ENCODE measurements at regions of chr4 and their contacts with region 1.

Region 1: GRCh38 chr4:112284662-112285411 is 867 bp downstream of the TIFA start:
- DNase-seq: peak in 2 of 3 donors; percentile 43 to 80
- H3K4me3 ChIP-seq: peak overlapping the region; percentile 53 to 93 (median 61)
- H3K4me3 Mint-ChIP-seq: peak overlapping the region; percentile 94 to 96
- H3K27ac ChIP-seq: peak overlapping the region; percentile 65 to 86
- H3K27ac Mint-ChIP-seq: peak overlapping the region; percentile 83 to 92 (median 91)
- H3K4me1 ChIP-seq: peaks cover 46 to 71% of the 10 kb centered on the region in 2 donors
- H3K4me1 Mint-ChIP-seq: peaks cover 86% of the 10 kb centered on the region
- H3K27me3 ChIP-seq: no peaks in the 10 kb centered on the region
- H3K27me3 Mint-ChIP-seq: no peaks in the 10 kb centered on the region
- CTCF ChIP-seq: no peak

Region 2: DNA sequence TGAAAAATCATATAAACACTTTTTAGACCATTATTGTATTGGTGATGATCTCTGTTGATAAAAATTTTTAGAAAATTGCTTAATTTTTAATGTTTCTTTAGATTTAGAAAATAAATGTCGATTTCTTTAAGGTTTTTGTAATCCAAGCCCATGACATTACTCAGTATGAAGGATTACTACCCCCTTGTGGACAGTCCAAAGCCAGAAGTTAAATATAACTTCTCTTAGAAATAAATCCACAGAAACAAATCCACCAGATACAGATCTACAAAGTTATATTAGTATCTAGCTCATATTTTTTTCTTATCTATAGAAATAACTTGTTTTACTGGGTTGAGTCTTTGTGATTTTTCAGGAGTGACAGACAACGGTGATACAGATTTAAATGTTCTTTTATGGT is 18.0 kb before region 1 on chr4:
- intact Hi-C with region 1: no loop called
- DNase-seq: no peak
- H3K4me3 ChIP-seq: no peak overlapping the region
- H3K4me3 Mint-ChIP-seq: no peak overlapping the region
- H3K27ac ChIP-seq: no peak overlapping the region
- H3K27ac Mint-ChIP-seq: no peak overlapping the region
- H3K4me1 ChIP-seq: peaks cover 0 to 6% of the 10 kb centered on the region in 2 donors
- H3K4me1 Mint-ChIP-seq: peaks cover 17% of the 10 kb centered on the region
- H3K27me3 ChIP-seq: no peaks in the 10 kb centered on the region
- H3K27me3 Mint-ChIP-seq: peaks cover 0 to under 1% (median 0%) of the 10 kb centered on the region in 3 donors
- CTCF ChIP-seq: peak; percentile 54

Region 3: GRCh38 chr4:112296949-112297880 is 12.4 kb after region 1 on chr4 and contains the start of gene ALPK1:
- intact Hi-C with region 1: loop called in 1 of 2 experiments (anchors 1 kb)
- DNase-seq: peak; percentile 83 to 93 (median 92)
- H3K4me3 ChIP-seq: peak within 1 kb of the TSS; percentile 42 to 87 (median 78)
- H3K4me3 Mint-ChIP-seq: peak within 1 kb of the TSS; percentile 75 to 92
- H3K27ac ChIP-seq: peak within 1 kb of the TSS; percentile 63 to 90
- H3K27ac Mint-ChIP-seq: peak within 1 kb of the TSS; percentile 89 to 97 (median 94)
- H3K4me1 ChIP-seq: peaks cover 22 to 45% of the 10 kb centered on the region in 2 donors
- H3K4me1 Mint-ChIP-seq: peaks cover 30% of the 10 kb centered on the region
- H3K27me3 ChIP-seq: no peaks in the 10 kb centered on the region
- H3K27me3 Mint-ChIP-seq: peaks cover 0 to 1% (median 0%) of the 10 kb centered on the region in 3 donors
- CTCF ChIP-seq: no peak
- polyA plus RNA-seq, gene ALPK1: 5.3 to 14.2 (median 8.1) TPM

Region 4: GRCh38 chr4:112735474-112735951 is 450.7 kb after region 1 on chr4:
- intact Hi-C with region 1: no loop called
- DNase-seq: no peak
- H3K4me3 ChIP-seq: no peak overlapping the region
- H3K4me3 Mint-ChIP-seq: no peak overlapping the region
- H3K27ac ChIP-seq: no peak overlapping the region
- H3K27ac Mint-ChIP-seq: no peak overlapping the region
- H3K4me1 ChIP-seq: no peaks in the 10 kb centered on the region
- H3K4me1 Mint-ChIP-seq: no peaks in the 10 kb centered on the region
- H3K27me3 ChIP-seq: no peaks in the 10 kb centered on the region
- H3K27me3 Mint-ChIP-seq: peaks cover 0 to 6% (median 4%) of the 10 kb centered on the region in 3 donors
- CTCF ChIP-seq: no peak